ENCODE measurements at regions of chr7 and their contacts with region 1.

Region 1: GRCh38 chr7:149624419-149625339 is 127.1 kb upstream of the ZNF746 start:
- DNase-seq: peak; percentile 97
- ATAC-seq: peak; percentile 99

Region 2: GRCh38 chr7:149497456-149498261 is 127.0 kb before region 1 on chr7 and contains the start of gene ZNF746:
- intact Hi-C with region 1: loop called (anchors 10 kb)
- DNase-seq: peak; percentile 93
- ATAC-seq: peak; percentile 96
- total RNA-seq, gene ZNF746: 6.7 TPM

Region 3: DNA sequence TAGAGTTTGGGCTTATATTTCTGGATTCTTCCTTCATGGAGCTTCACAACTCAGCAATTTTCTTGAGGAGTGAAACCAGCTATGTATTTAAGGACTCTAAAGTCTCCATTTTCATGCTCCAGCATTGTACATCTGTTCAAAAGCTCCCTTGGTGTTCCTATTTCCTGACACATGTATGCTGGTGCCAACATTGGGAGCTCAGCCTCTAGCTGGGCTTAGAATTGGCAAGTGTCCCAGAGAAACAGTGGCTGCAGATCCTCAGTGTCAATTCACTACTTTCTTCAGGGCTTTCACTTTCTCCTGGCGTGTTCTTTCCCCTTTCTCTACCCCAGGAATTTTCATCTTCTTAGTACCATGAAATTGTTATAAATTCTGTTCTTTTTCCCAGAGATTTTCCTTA is 45.6 kb after region 1 on chr7:
- intact Hi-C with region 1: no loop called
- DNase-seq: no peak
- ATAC-seq: peak; percentile 97

Measured in Right ventricle myocardium superior (tissue), 1 donor.